Heart right ventricle (tissue), 16 donors: ENCODE measurements at regions of chr22 and their contacts with region 1.

Region 1: DNA sequence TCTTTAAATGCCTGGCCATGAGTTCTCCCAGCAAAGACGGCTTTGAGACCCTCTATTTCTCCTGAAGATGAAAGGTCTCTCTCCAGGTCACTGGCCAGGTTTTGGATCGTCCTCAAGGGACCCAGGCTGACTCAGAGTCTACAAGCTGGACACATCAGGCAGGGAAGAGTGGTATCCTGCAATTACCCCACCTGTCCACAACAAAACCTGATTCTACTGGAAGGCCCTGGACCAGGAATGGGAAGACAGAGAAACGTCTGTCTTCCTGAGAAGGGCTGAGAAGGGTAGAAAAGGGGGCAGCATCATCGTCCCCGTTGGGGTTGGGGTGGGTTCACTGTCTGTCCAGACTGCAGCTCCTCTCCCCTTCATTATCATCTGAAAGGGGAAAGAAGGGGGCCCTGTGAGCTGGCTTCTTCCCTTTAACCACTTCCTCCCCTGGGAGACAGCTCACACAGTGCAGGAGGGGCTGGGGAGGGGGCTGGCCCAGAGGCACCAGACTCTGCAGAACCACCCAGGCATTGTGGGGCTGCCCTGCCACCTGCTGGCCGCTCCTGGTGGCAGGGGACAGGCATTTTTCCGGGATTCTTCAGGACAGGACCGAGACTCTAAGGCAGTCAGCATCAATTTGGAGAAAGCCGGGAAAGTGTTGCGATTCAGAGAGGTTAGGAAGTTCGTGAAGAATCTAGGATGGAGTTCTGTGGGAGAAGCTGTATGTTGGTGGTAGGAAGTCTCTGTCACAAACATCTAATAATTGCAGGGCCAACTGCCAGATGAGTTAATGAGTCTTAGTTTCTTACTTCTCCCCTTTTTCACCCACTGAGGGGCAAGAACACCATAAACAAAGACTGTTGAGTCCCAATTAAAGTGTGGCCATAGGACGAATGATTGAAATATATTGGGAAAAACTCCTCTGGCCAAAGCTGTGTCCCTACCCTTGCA is 57.6 kb downstream of the SYN3 start:
- DNase-seq: peak; percentile 47 to 74
- ATAC-seq: peak; percentile 71 to 87 (median 82)
- H3K4me3 ChIP-seq: no peak overlapping the region
- H3K27ac ChIP-seq: no peak overlapping the region
- H3K4me1 ChIP-seq: peaks cover 0 to 12% (median 5%) of the 10 kb centered on the region in 9 donors
- H3K27me3 ChIP-seq: peaks cover 0 to 4% (median 0%) of the 10 kb centered on the region in 7 donors
- CTCF ChIP-seq: peak; percentile 91 to 97 (median 93)

Region 2: GRCh38 chr22:32411829-32412592 is 588.6 kb before region 1 on chr22 and contains the start of gene RTCB:
- intact Hi-C with region 1: loop called in 2 of 10 experiments (anchors 10 kb)
- DNase-seq: peak; percentile 95 to 96
- ATAC-seq: peak; percentile 90 to 96 (median 95)
- H3K4me3 ChIP-seq: peak within 1 kb of the TSS; percentile 68 to 96 (median 86)
- H3K27ac ChIP-seq: peak within 1 kb of the TSS in 9 of 10 donors; percentile 23 to 85 (median 73)
- H3K4me1 ChIP-seq: peaks cover 0 to 42% (median 22%) of the 10 kb centered on the region in 9 donors
- H3K27me3 ChIP-seq: peaks cover 0 to 5% (median 0%) of the 10 kb centered on the region in 7 donors
- CTCF ChIP-seq: no peak
- total RNA-seq, gene RTCB: 41.1 to 51.1 (median 47.0) TPM

Region 3: DNA sequence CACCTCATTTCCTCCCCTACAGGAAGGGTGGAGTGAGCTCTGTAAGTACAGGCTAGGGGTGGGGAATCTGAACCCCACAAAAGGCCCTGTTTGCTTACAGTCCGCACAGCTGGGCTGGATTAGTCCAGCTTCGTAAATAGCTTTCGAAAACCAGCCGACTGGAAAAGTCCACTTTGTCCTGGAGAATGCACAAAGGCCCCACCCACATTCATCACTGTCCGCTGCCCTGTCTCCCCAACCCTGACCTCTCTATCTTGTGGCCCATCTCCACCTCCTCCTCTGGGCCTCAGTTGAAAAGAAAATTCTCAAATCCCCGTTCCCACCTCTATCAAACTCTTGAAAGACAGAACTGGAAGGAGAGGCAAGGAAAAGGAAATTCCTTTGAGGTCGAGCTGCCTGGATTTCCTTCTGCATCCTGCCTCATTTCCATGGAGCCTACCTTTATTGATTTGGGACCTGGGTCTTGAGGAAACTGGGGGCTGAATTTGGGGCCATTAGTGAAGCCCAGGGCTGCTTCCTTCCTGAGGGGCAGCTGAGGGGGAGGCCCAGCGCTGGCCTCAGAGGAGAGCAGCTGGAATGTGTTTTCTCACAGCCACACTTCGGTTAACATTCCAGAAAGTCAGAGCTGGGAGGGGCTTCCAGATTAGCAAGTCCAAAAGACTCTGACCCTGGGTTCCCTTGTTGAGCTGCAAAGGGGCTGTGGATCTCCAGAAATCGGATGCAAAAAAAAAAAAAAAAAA is 378.4 kb before region 1 on chr22:
- intact Hi-C with region 1: no loop called
- DNase-seq: peak; percentile 50 to 67
- ATAC-seq: peak; percentile 51 to 79 (median 71)
- H3K4me3 ChIP-seq: no peak overlapping the region
- H3K27ac ChIP-seq: peak overlapping the region; percentile 67 to 93 (median 89)
- H3K4me1 ChIP-seq: peaks cover 36 to 90% (median 76%) of the 10 kb centered on the region in 9 donors
- H3K27me3 ChIP-seq: no peaks in the 10 kb centered on the region
- CTCF ChIP-seq: no peak

Region 4: GRCh38 chr22:32655068-32655467 is 345.5 kb before region 1 on chr22:
- intact Hi-C with region 1: loop called in 9 of 10 experiments (anchors 1 to 5 kb)
- DNase-seq: no peak
- ATAC-seq: no peak
- H3K4me3 ChIP-seq: no peak overlapping the region
- H3K27ac ChIP-seq: no peak overlapping the region
- H3K4me1 ChIP-seq: peaks cover 0 to 7% (median 1%) of the 10 kb centered on the region in 9 donors
- H3K27me3 ChIP-seq: no peaks in the 10 kb centered on the region
- CTCF ChIP-seq: no peak

Region 5: GRCh38 chr22:32660292-32660691 is 340.3 kb before region 1 on chr22:
- intact Hi-C with region 1: loop called in 9 of 10 experiments (anchors 1 to 5 kb)
- DNase-seq: peak; percentile 70 to 71
- ATAC-seq: peak; percentile 67 to 86 (median 72)
- H3K4me3 ChIP-seq: no peak overlapping the region
- H3K27ac ChIP-seq: peak overlapping the region in 2 of 10 donors; percentile 14 to 59
- H3K4me1 ChIP-seq: peaks cover 0 to 21% (median 7%) of the 10 kb centered on the region in 9 donors
- H3K27me3 ChIP-seq: no peaks in the 10 kb centered on the region
- CTCF ChIP-seq: peak; percentile 68 to 87 (median 80)